SK-N-SH (cell line): ENCODE measurements at regions of chr10 and their contacts with region 1.

Region 1: GRCh38 chr10:95363303-95363912 is 72.6 kb upstream of the PDLIM1 start:
- DNase-seq: peak; percentile 70
- H3K4me3 ChIP-seq: no peak overlapping the region; a peak in 1 of 4 replicates
- H3K27ac ChIP-seq: no peak overlapping the region
- H3K4me1 ChIP-seq: no peaks in the 10 kb centered on the region
- H3K27me3 ChIP-seq: no peaks in the 10 kb centered on the region
- CTCF ChIP-seq: peak; percentile 96
- EP300 ChIP-seq: no peak
- RAD21 ChIP-seq: peak; percentile 98

Region 2: GRCh38 chr10:95133016-95133752 is 230.2 kb before region 1 on chr10:
- CTCF ChIA-PET with region 1: interaction called, 17 read pairs
- POLR2A ChIA-PET with region 1: no interaction called
- DNase-seq: peak; percentile 41
- H3K4me3 ChIP-seq: no peak overlapping the region; a peak in 1 of 4 replicates
- H3K27ac ChIP-seq: no peak overlapping the region
- H3K4me1 ChIP-seq: no peaks in the 10 kb centered on the region
- H3K27me3 ChIP-seq: no peaks in the 10 kb centered on the region
- CTCF ChIP-seq: peak; percentile 80
- EP300 ChIP-seq: no peak
- RAD21 ChIP-seq: peak; percentile 85

Region 3: DNA sequence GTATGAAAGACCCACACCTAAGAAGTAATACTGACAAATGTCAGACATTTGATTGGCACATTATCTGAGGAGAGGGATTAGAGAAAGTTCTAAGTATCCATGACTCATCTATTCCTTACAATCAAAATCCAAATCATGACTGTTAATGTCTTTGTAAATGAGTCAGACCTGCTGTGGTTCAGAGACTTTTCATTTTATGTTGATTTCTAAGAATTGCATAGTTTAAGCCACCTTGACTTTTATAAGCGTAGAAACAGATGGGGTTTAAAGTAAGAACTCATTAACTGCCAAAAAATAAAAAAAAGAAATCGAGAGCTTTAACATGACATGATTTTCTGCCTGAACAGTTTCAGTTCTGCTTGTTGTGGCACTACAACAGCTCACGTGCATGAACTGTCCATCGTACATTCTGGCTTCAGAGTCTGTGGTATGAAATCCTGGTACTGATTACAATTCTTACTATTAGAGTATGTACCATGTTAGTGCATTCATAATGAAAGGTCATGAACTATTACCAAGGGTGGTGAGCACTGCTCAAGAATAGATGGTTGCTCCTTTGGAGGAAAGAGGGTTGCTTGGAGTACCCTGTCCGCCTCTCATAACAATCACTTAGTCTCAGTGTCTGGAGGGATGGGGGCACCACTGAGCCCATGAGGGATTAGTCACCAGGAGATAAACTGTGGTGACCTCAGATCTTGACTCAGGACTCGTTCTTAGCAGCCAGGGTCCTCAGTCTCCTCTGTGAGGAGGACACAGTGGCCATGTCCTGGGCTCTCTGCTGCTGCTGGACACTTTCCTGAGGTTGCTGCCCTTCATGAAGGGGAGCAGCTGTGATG is 127.1 kb before region 1 on chr10:
- CTCF ChIA-PET with region 1: interaction called, 404 read pairs
- POLR2A ChIA-PET with region 1: no interaction called
- DNase-seq: no peak
- H3K4me3 ChIP-seq: no peak overlapping the region
- H3K27ac ChIP-seq: peak overlapping the region in 1 of 2 experiments; percentile 71; a peak in 2 of 4 replicates
- H3K4me1 ChIP-seq: peaks cover 0 to 8% of the 10 kb centered on the region in 2 experiments; a peak in 2 of 4 replicates
- H3K27me3 ChIP-seq: no peaks in the 10 kb centered on the region
- CTCF ChIP-seq: no peak
- EP300 ChIP-seq: peak in 1 of 2 experiments; percentile 77; a peak in 2 of 4 replicates
- RAD21 ChIP-seq: no peak

Region 4: DNA sequence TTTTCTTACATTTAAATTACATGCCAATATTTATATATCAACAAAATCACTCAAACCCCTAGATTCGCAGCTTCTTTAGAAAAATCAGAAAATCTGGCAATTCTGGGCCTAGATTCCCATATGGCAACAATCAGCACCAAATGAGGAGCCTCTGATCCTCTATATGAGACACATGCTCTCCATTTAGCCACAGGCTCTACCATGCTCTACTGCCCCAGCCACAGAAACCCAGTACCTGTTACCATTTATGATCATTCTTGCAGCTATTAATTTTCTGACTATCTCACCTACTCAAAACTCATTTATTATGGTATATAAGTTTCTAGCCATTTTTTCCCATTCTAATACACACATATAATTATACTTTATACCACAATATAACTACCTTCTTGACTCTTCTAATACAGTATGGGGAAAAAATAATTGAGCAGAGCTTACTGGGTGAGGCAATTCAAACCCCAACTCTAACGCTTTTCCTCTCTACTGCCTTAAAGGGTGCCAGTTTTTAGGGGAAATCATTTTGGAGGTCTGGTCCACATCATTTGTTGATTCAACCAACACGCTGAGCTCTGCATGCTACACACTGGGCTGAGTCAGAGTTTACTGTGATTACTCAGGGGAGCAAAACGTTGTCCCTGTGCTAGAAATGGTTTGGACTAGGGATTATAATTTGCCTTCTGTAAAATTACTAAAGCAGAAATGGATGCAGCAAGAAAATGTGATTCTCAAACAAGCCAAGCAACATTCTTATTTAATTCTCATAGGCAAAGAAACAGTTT is 84.2 kb before region 1 on chr10:
- CTCF ChIA-PET with region 1: interaction called, 13 read pairs
- POLR2A ChIA-PET with region 1: no interaction called
- DNase-seq: no peak
- H3K4me3 ChIP-seq: no peak overlapping the region
- H3K27ac ChIP-seq: peak overlapping the region in 1 of 2 experiments; percentile 48; a peak in 2 of 4 replicates
- H3K4me1 ChIP-seq: peaks cover 2 to 27% of the 10 kb centered on the region in 2 experiments; a peak in 2 of 4 replicates
- H3K27me3 ChIP-seq: no peaks in the 10 kb centered on the region
- CTCF ChIP-seq: no peak
- EP300 ChIP-seq: no peak
- RAD21 ChIP-seq: no peak

Region 5: GRCh38 chr10:95350219-95350829 is 13.1 kb before region 1 on chr10:
- CTCF ChIA-PET with region 1: interaction called, 33 read pairs
- POLR2A ChIA-PET with region 1: no interaction called
- DNase-seq: no peak
- H3K4me3 ChIP-seq: no peak overlapping the region
- H3K27ac ChIP-seq: no peak overlapping the region
- H3K4me1 ChIP-seq: no peaks in the 10 kb centered on the region
- H3K27me3 ChIP-seq: no peaks in the 10 kb centered on the region
- CTCF ChIP-seq: no peak
- EP300 ChIP-seq: no peak
- RAD21 ChIP-seq: no peak

Region 6: DNA sequence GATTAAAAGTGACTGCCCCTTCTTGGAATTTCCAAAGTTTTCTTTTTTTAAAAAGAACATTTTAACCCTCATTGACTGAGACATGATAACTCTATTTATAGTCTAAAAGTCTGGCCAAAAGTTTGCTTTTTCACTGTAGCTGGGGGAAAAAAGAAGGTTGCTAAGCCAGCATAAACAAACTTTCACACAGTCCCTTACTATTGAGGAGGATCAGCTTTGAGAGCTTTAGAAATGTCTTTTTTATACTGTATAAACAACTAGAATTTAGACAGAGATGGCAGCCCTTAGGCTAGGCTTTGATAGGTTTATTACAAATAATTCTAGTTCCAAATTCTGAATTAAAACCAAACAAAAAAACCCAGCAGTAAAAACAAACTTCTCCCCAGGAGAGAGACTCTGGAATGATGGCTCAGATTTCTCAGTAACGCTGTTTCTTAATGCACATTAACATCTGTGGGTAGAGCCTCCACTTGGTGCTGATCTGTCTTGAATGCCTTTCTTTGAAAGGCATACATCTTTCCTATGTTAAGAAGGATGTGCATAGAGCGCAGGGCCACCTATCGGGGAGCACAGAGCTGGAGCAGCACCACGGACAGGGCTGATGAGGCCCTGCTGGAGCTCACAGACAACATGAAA is 28.3 kb after region 1 on chr10:
- CTCF ChIA-PET with region 1: no interaction called
- POLR2A ChIA-PET with region 1: no interaction called
- DNase-seq: no peak
- H3K4me3 ChIP-seq: no peak overlapping the region
- H3K27ac ChIP-seq: no peak overlapping the region
- H3K4me1 ChIP-seq: no peaks in the 10 kb centered on the region
- H3K27me3 ChIP-seq: no peaks in the 10 kb centered on the region
- CTCF ChIP-seq: no peak
- EP300 ChIP-seq: no peak
- RAD21 ChIP-seq: no peak

Region 7: DNA sequence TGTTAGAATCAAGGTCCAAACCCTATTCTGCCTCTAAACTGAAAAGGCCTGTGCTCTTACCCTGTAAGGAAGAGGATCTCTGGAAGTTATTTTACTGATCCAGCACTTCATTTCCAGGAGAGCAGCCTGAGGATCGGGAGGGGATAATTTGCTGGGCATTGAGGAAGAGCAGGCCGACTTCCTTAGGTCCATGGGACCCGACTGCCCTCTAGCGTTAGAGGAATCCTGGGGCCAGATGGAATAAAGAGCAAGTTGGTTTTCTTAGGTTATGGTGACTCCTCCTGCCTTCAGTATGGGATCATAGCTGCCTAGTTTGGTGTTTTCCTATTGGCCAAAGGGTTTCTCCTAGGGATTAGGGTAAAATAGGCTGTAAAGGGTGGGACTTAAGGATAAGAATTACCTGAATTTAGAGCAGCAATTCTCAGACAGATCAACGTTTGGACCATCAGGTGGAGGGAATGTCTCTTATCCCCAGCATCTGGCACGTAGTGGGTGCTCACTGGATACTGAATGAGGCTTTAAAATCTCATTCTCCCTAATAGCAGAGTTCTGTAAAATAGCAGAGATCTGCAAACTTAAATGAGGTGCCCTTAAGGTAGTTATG is 237.8 kb after region 1 on chr10:
- CTCF ChIA-PET with region 1: interaction called, 12 read pairs
- POLR2A ChIA-PET with region 1: no interaction called
- DNase-seq: peak; percentile 80
- H3K4me3 ChIP-seq: peak overlapping the region in 1 of 2 experiments; percentile 13; a peak in 1 of 4 replicates
- H3K27ac ChIP-seq: no peak overlapping the region
- H3K4me1 ChIP-seq: no peaks in the 10 kb centered on the region
- H3K27me3 ChIP-seq: no peaks in the 10 kb centered on the region
- CTCF ChIP-seq: peak; percentile 96
- EP300 ChIP-seq: no peak
- RAD21 ChIP-seq: peak; percentile 98